Left cardiac atrium (tissue), 4 donors: ENCODE measurements at regions of chr15 and their contacts with region 1.

Region 1: GRCh38 chr15:61266921-61267320 is 37.8 kb upstream of the RORA start:
- DNase-seq: no peak
- ATAC-seq: no peak

Region 2: GRCh38 chr15:61327019-61327631 is 60.2 kb after region 1 on chr15:
- intact Hi-C with region 1: loop called in 1 of 2 experiments (anchors 10 kb)
- DNase-seq: no peak
- ATAC-seq: peak in 1 of 2 donors; percentile 25

Region 3: DNA sequence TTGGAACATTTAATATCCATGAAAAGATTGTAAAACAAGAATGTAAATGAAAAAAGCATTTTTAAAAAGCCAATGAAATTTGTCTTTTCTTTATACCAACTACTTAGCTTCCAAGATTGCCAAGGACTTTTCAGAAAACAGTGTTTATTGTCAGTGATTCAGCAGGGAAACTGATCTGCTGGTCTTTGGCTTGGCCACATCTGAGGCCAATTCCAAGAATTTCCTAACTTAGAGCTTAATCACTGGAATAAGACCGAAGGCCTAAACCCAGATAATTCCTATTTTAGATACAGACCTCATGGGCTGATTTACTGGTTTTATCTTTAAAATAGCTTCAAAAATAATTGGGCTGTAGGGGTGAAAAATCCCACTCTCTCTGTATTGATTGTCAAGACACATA is 222.7 kb after region 1 on chr15:
- intact Hi-C with region 1: no loop called
- DNase-seq: no peak
- ATAC-seq: peak; percentile 30 to 49